AG04450 (cell line): ENCODE measurements at regions of chr12 and their contacts with region 1.

Region 1: GRCh38 chr12:6867413-6868210 is at the start of gene TPI1:
- DNase-seq: peak; percentile 51
- H3K4me3 ChIP-seq: peak within 1 kb of the TSS; percentile 90
- H3K27ac ChIP-seq: peak within 1 kb of the TSS; percentile 39
- H3K27me3 ChIP-seq: no peaks in the 10 kb centered on the region
- CTCF ChIP-seq: no peak
- polyA plus RNA-seq, gene TPI1: 1,246 and 1,347 TPM in 2 replicates

Region 2: GRCh38 chr12:6792522-6793201 is 75.0 kb before region 1 on chr12:
- CTCF ChIA-PET with region 1: interaction called, 4 read pairs
- POLR2A ChIA-PET with region 1: interaction called, 11 read pairs
- DNase-seq: no peak
- H3K4me3 ChIP-seq: peak overlapping the region; percentile 31
- H3K27ac ChIP-seq: peak overlapping the region; percentile 31
- H3K27me3 ChIP-seq: peaks cover 4% of the 10 kb centered on the region
- CTCF ChIP-seq: no peak

Region 3: GRCh38 chr12:6851921-6852650 is 15.5 kb before region 1 on chr12 and contains the start of gene USP5:
- CTCF ChIA-PET with region 1: interaction called, 26 read pairs
- POLR2A ChIA-PET with region 1: interaction called, 57 read pairs
- DNase-seq: peak; percentile 99
- H3K4me3 ChIP-seq: peak within 1 kb of the TSS; percentile 97
- H3K27ac ChIP-seq: peak within 1 kb of the TSS; percentile 92
- H3K27me3 ChIP-seq: no peaks in the 10 kb centered on the region
- CTCF ChIP-seq: no peak; the same call in 1 of the 2 replicates
- polyA plus RNA-seq, gene USP5: 47.1 and 54.8 TPM in 2 replicates

Region 4: DNA sequence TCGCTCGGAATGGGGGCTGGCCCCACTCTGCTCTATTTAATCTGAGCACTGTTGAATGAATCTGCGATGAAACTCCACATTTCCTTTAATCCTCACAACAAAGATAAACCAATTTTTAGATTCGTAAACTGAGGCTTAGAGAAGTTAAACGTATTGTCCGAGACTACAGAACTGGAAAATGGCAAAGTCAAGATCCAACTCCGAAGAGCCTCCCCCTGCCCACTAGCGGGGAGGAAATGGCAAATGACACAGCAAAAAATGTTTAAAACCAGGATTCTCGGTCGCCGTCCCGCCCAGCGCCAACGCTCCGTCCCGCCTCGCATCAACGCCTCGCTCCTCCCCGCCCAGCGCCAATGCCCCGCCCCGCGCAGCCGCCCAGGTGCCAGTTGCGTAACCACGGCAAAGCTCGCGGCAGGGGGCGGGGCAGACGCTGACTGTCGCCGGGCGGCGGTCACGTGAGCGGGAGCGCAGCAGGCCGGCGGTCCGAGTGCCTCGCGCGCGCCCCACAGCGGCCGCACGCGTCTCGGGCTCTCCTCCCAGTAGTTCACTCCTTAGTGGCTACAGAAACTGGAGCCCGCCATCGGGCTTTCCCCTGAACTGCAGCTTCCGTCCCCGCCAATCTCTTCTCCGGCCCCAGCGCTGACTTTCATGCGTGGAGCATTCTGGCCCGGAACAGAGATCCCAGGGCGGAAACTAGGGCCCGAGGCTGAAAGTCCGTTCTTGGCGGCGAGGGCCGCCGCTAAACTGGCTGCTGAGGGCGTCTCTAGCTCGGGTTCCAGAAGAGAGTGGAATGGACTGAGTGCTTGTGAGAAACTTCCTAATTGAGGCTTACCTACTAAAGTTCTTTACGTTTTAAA is 23.4 kb after region 1 on chr12:
- CTCF ChIA-PET with region 1: interaction called, 50 read pairs
- POLR2A ChIA-PET with region 1: interaction called, 35 read pairs
- DNase-seq: peak; percentile 91
- H3K4me3 ChIP-seq: peak overlapping the region; percentile 59
- H3K27ac ChIP-seq: peak overlapping the region; percentile 94
- H3K27me3 ChIP-seq: no peaks in the 10 kb centered on the region
- CTCF ChIP-seq: peak; percentile 70